T-cell (primary cell): ENCODE measurements at regions of chr12 and their contacts with region 1.

Region 1: GRCh38 chr12:52582971-52583456 is 9.4 kb upstream of the KRT74 start:
- DNase-seq: peak; percentile 29 to 82 (median 64)
- ATAC-seq: peak; percentile 16 to 56 (median 46)
- H3K4me3 ChIP-seq: no peak overlapping the region
- H3K4me3 Mint-ChIP-seq: no peak overlapping the region
- H3K27ac ChIP-seq: no peak overlapping the region
- H3K27ac Mint-ChIP-seq: peak overlapping the region; percentile 62 to 74
- H3K4me1 ChIP-seq: peaks cover 32 to 50% of the 10 kb centered on the region in 2 experiments
- H3K4me1 Mint-ChIP-seq: peaks cover 61 to 67% (median 66%) of the 10 kb centered on the region in 3 donors
- H3K27me3 ChIP-seq: peaks cover 0 to 9% of the 10 kb centered on the region in 2 experiments
- H3K27me3 Mint-ChIP-seq: peaks cover 0 to 3% of the 10 kb centered on the region in 2 donors

Region 2: DNA sequence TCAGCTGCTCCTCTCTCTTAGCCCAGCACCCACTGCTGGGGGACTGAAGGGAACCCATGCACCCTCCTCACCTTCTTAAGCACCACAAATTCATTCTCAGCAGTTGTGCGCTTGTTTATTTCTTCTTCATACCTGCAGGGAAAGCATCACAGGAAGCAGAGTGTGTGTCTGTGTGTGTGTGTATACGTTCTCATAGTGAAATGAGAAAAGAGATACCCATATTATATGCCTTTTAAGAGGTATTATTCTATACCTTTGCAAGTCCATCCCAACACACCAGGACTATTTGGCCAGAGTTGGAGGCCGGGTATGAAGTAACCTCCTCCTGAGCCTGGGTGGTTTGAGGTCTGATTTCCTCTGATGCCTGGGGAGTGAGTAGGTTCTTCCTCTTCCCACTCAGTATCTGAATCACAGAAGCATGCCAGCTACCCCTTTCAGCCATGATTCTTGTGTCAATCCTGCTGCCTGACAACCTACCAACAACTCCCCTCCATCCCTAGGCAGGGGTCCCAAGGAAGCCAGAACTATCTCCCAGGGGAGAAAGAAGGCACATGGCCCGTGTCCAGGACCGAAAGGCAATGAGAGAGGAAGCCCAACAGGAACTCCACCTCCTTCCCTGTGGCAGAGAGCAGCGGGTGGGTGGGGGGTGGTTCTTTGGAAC is 32.3 kb after region 1 on chr12:
- CTCF ChIA-PET with region 1: interaction called, 7 to 24 read pairs
- POLR2A ChIA-PET with region 1: interaction called in 1 of 2 experiments, 4 read pairs
- DNase-seq: peak in 10 of 35 experiments; percentile 10 to 58 (median 30)
- ATAC-seq: peak; percentile 29 to 42 (median 38)
- H3K4me3 ChIP-seq: peak overlapping the region in 1 of 2 donors; percentile 2
- H3K4me3 Mint-ChIP-seq: peak overlapping the region; percentile 1 to 67 (median 62)
- H3K27ac ChIP-seq: peak overlapping the region; percentile 70
- H3K27ac Mint-ChIP-seq: peak overlapping the region; percentile 89 to 99
- H3K4me1 ChIP-seq: peaks cover 70 to 85% of the 10 kb centered on the region in 2 experiments
- H3K4me1 Mint-ChIP-seq: peaks cover 78 to 95% (median 82%) of the 10 kb centered on the region in 3 donors
- H3K27me3 ChIP-seq: no peaks in the 10 kb centered on the region
- H3K27me3 Mint-ChIP-seq: peaks cover 0 to 4% of the 10 kb centered on the region in 2 donors

Region 3: DNA sequence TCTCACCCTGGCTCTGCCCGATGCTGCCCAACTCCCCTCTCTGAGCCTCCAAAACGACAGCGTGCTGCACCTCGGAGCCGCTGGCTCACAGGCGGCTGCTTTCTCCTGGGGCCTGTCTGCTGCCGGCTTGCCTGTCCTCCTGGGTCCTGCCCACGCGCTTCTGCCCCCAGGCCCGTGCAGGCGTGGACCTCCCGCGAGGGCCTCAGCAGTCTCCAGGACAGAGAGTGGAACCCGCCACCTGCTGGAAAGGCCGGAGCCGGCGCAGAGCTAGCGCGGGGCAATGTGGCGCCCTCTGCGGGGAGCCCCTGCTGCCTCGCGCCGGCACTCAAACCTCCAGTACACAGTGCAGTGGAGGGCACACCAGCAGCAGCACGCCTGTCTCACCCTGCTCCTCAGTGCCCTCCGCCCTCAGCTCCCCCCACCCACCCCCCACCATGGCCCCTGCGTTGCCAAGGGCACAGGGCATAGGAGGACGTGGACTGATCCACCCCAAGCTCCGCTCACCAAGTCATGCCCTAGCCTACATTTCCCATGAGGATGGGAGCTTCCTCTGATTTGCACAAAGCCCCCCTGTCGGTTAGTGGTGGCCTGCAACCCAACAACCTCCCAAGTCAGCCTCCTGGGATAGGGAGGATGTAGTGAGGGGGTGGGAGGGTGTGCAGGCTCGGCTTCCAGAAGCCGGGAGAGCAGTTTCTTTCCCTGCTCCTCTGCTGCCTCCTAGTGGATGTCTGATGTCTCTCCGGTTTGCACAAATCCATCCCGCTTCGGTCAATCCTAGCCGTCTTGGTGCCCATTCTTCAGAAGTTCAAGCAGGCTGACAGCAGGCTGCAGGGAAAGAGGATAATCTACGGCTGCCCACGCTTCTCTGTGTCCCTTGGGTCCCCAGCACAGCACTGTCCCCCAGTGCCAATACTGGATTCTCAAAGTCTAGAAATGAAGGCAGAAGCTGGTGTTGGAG is 296.7 kb after region 1 on chr12:
- CTCF ChIA-PET with region 1: interaction called, 37 to 45 read pairs
- POLR2A ChIA-PET with region 1: interaction called, 5 to 19 read pairs
- DNase-seq: peak; percentile 32 to 83 (median 71)
- ATAC-seq: peak; percentile 91 to 98 (median 94)
- H3K4me3 ChIP-seq: peak overlapping the region in 1 of 2 donors; percentile 30
- H3K4me3 Mint-ChIP-seq: peak overlapping the region; percentile 56 to 69 (median 68)
- H3K27ac ChIP-seq: no peak overlapping the region
- H3K27ac Mint-ChIP-seq: no peak overlapping the region
- H3K4me1 ChIP-seq: peaks cover 0 to 19% of the 10 kb centered on the region in 2 experiments
- H3K4me1 Mint-ChIP-seq: peaks cover 9 to 15% (median 15%) of the 10 kb centered on the region in 3 donors
- H3K27me3 ChIP-seq: peaks cover 0 to 51% of the 10 kb centered on the region in 2 experiments
- H3K27me3 Mint-ChIP-seq: peaks cover 7 to 11% of the 10 kb centered on the region in 2 donors

Region 4: GRCh38 chr12:54541751-54542290 is 1958.8 kb after region 1 on chr12:
- CTCF ChIA-PET with region 1: no interaction called
- POLR2A ChIA-PET with region 1: no interaction called
- DNase-seq: no peak
- ATAC-seq: no peak
- H3K4me3 ChIP-seq: no peak overlapping the region
- H3K4me3 Mint-ChIP-seq: no peak overlapping the region
- H3K27ac ChIP-seq: no peak overlapping the region
- H3K27ac Mint-ChIP-seq: peak overlapping the region in 1 of 2 donors; percentile 34
- H3K4me1 ChIP-seq: no peaks in the 10 kb centered on the region
- H3K4me1 Mint-ChIP-seq: no peaks in the 10 kb centered on the region
- H3K27me3 ChIP-seq: no peaks in the 10 kb centered on the region
- H3K27me3 Mint-ChIP-seq: no peaks in the 10 kb centered on the region